Posterior cingulate gyrus (tissue), 11 donors: ENCODE measurements at regions of chr7 and their contacts with region 1.

Region 1: GRCh38 chr7:128791121-128791961 is 427 bp upstream of the CCDC136 start:
- DNase-seq: peak; percentile 54 to 96 (median 78)

Region 2: DNA sequence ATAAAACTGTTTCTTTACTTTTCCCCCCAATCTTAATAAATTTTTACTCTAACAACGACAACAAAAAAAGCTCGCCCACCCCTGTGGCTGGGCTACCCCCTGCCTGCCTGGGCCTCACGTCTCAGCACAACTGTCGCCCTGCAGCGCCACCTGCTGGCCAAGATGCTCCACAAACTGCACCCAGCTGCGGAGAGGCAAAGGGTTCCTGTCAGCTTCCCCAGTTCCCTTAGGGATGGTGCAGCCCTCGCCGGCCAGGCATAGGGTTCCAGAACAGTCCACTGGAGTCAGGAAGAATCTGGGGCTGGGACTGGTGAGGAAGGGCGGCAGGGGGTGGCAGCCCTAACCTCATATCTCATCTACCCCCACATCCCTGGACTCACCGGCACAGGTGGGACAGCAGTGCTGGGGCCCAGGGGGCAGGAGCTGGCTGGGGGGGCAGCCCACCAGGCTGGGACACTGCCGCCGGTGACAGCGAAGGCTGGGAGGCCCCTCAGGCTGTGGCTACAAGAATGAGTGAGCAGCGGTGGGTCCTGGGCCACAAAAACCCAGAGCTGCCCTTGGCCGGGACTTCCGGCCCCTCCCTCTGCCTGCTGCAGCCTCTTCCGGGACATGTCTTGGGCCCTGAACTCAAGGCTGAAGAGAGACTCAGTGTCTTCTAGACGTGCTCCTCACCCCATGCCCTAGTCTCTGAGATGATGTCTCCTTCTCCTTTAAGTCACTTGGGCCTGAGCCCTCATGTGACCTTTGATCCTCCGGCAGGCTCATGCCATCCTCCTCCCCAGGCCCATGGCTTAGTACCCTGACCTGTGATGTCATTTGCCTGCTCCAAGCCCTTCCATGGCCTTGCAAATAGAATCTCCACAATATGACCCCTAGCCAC is 92.5 kb after region 1 on chr7:
- intact Hi-C with region 1: loop called (anchors 5 kb)
- DNase-seq: peak; percentile 72 to 97 (median 86)